ENCODE measurements at regions of chr12 and their contacts with region 1.

Region 1: DNA sequence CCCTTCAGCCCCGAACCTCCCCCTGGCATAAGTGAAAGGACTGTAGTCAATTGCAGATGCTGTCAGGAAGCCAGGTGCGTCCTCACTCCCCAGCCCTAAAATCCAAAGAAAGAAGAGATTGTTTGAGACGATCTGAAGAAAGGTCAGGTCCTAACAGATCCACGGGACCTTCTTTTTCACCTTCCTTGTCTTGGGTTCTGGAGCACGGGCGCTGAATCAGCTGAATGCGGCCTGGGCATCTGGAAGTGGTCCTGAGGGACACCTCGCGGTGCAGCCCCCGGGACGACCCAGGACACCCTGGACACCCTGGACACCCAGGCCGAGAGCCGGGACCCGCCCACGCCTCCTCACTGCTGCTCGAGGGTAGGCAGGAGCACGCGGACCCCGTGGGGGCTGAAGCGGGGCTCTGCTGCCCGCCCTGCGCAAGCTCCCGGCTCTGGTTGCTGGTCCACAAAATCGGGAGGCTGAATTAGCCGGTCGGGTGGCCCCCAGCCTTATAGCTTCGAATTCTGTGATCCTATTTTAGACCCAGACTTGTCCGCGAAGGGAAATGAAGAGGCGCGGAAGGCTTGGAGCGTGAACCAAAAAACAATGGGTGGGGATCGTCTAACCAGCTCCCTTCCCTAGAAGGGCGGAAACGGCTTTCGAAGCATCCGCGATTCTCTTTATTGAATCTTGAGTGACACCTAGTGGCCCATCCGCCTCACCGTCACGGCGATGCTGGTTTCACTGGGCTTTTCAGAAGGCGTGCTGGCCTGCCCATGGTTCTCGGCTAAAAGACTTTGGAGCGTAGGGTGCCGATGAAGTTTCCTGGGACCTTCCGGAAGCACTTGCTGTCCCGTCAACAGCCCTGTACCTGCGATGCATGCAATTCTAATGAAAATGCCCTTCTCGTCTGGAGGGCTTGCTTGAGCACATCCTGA is 46.4 kb upstream of the PLXNC1 start:
- DNase-seq: peak; percentile 86
- H3K4me3 ChIP-seq: peak overlapping the region; percentile 35 to 59
- H3K27ac ChIP-seq: peak overlapping the region; percentile 49 to 72
- H3K4me1 ChIP-seq: peaks cover 3% of the 10 kb centered on the region
- H3K27me3 ChIP-seq: no peaks in the 10 kb centered on the region
- CTCF ChIP-seq: peak; percentile 60 to 91 (median 86)
- POLR2A ChIP-seq: peak; percentile 12

Region 2: DNA sequence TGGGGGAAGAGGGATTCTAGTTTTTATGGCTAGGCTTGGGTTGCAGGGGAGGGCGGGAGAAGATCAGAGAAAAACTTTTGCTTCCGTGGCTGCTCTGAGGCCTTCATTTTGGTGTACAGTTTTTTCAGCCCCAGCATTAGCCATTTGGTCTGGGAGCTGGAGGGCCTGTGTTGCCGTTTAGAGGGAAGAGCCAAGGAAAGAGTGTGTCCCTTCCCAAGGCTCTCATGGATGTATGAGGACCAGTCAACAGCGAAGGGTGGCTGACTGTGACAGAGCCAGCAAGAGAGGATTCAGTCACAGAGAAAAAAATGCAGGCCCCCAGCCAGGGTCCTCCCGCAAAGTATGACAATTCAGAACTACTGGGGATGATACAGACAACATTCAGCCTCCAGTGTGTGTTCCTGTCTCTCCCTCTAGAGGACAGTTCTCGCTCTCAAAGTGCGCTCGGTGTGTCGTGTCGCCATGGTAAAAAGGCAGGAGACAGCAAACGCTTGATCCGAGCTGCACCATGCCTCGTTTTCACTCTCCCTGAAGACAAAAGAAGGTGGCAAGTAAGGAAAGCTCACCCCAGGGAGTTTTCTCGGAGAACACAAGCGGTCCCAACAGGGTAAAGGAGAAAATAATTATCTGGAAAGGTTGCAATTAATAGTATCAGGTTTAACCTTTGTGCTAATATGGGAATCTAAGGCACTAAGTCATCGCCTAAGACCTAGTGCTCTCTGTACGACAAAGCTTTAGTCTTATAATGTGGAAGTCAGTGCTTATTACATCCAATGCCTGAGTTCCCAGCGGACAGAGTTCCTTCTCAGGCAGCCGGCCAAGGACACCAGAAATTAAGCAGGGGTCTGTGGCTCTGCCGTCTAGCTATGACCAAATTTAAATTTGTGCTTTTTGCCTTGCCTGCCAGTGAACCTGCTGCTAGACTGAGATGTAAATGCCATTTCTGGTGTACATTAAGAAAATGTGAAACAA is 110.9 kb before region 1 on chr12:
- intact Hi-C with region 1: loop called (anchors 5 kb)
- DNase-seq: no peak
- H3K4me3 ChIP-seq: no peak overlapping the region
- H3K27ac ChIP-seq: no peak overlapping the region
- H3K4me1 ChIP-seq: no peaks in the 10 kb centered on the region
- H3K27me3 ChIP-seq: no peaks in the 10 kb centered on the region
- CTCF ChIP-seq: peak in 1 of 4 experiments; percentile 39
- POLR2A ChIP-seq: no peak

Measured in prostate gland (tissue), 2 donors.